Lower lobe of right lung (tissue), 2 donors: ENCODE measurements at regions of chr12 and their contacts with region 1.

Region 1: DNA sequence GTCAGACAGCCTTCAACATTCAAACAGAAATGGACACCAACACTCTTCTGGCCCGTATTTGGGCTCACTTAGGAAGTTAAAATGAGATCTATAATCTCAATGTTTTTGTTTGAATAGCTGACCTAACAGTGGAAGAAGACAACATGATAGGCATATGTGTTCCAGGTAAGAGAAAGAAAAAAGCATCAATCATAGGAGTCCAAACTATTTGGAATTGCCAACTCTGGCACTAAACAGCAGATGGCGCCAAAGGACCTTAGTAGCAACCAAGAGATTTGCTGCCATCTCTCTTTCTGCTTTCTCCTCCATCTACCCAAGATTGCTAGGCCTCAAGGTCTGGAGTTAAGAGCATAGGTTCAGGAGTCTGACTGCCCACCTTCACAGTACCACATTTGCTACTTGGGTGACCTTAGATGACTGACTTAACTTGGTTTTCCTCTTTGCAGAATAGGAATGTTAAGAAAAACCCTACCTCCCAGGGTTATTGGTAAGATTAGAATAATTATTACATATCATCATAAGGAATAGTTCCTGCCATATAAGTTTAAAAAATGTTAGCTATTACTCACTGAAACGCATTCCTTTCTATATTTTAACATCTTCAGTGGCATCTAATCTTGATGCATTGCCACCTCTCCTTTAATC is 30.2 kb downstream of the PEX5 start:
- DNase-seq: peak; percentile 57
- ATAC-seq: peak; percentile 69 to 72
- H3K4me3 ChIP-seq: no peak overlapping the region
- H3K27ac ChIP-seq: no peak overlapping the region
- H3K4me1 ChIP-seq: no peaks in the 10 kb centered on the region
- H3K27me3 ChIP-seq: no peaks in the 10 kb centered on the region
- CTCF ChIP-seq: peak; percentile 86

Region 2: GRCh38 chr12:7018350-7019042 is 201.2 kb before region 1 on chr12 and contains the start of gene LPCAT3:
- intact Hi-C with region 1: no loop called
- DNase-seq: peak; percentile 98
- ATAC-seq: peak; percentile 98
- H3K4me3 ChIP-seq: peak within 1 kb of the TSS; percentile 72
- H3K27ac ChIP-seq: peak within 1 kb of the TSS; percentile 89
- H3K4me1 ChIP-seq: peaks cover 33% of the 10 kb centered on the region
- H3K27me3 ChIP-seq: no peaks in the 10 kb centered on the region
- CTCF ChIP-seq: peak; percentile 87
- total RNA-seq, gene LPCAT3: 67.7 TPM

Region 3: DNA sequence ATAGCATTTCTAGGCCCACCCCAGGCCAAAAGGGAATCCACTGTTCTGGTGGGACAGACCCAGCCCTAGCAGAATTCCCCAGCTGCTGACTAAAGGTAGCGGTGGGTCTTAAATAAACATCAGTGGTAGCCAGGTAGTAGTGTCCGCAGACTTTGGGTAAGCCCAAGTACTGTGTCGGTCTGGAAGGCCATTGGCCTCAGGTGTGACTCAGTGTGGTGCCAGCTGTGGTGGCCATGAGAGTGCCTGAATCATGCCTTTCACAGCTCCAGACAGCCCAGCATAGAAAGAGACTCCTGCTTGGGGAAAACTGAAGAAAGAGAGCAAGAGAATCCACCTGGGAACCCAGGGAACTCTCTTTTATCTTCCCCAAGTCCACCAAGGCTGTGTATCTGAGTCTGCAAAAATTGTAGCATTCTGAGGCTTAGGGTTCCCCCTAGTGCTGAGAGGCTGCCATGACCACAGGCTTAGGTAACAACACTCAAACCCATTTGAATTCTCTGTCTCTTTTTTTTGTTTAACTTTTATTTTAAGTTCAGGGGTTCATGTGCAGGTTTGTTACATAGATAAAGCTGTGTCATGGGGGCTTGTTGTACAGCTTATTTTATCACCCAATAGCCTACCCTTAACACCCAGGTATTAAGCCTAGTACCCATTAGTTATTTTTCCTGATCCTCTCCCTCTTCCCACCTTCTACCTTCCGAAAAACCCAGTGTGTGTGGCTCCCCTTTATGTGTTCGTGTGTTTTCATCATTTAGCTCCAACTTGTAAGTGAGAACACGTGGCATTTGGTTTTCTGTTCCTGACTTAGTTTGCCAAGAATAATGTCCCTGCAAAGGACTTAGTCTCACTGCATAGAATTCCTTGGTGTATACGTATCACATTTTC is 240.9 kb after region 1 on chr12:
- intact Hi-C with region 1: loop called (anchors 5 kb)
- DNase-seq: no peak
- ATAC-seq: peak; percentile 89 to 91
- H3K4me3 ChIP-seq: no peak overlapping the region
- H3K27ac ChIP-seq: no peak overlapping the region
- H3K4me1 ChIP-seq: no peaks in the 10 kb centered on the region
- H3K27me3 ChIP-seq: no peaks in the 10 kb centered on the region
- CTCF ChIP-seq: peak; percentile 87

Region 4: DNA sequence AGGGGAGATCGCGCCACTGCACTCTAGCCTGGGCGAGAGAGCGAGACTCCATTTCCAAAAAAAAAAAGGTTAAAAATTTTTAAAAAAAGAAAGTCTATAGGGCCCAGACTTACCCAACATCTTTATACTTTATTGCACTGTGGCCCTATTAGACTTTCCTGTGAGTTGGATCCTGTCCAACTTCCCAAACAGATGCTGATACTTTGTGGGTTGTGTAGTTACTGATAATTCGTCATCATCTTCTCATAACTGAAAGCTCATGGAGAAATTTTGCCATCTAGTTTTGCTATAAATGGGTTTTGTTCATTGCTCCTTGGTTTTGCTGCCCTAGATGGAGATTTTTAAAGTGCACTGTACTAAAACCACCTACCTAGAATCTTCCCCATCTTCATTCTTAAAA is 414.8 kb after region 1 on chr12:
- intact Hi-C with region 1: no loop called
- DNase-seq: no peak
- ATAC-seq: no peak
- H3K4me3 ChIP-seq: no peak overlapping the region
- H3K27ac ChIP-seq: no peak overlapping the region
- H3K4me1 ChIP-seq: peaks cover 6% of the 10 kb centered on the region
- H3K27me3 ChIP-seq: no peaks in the 10 kb centered on the region
- CTCF ChIP-seq: no peak

Region 5: GRCh38 chr12:7645394-7646177 is 425.9 kb after region 1 on chr12:
- intact Hi-C with region 1: loop called (anchors 10 kb)
- DNase-seq: no peak
- ATAC-seq: no peak
- H3K4me3 ChIP-seq: no peak overlapping the region
- H3K27ac ChIP-seq: no peak overlapping the region
- H3K4me1 ChIP-seq: no peaks in the 10 kb centered on the region
- H3K27me3 ChIP-seq: peaks cover 3% of the 10 kb centered on the region
- CTCF ChIP-seq: peak; percentile 84

Region 6: GRCh38 chr12:7959701-7960121 is 740.0 kb after region 1 on chr12:
- intact Hi-C with region 1: no loop called
- DNase-seq: no peak
- ATAC-seq: peak; percentile 73 to 75
- H3K4me3 ChIP-seq: peak overlapping the region; percentile 53
- H3K27ac ChIP-seq: peak overlapping the region; percentile 63
- H3K4me1 ChIP-seq: peaks cover 24% of the 10 kb centered on the region
- H3K27me3 ChIP-seq: no peaks in the 10 kb centered on the region
- CTCF ChIP-seq: no peak